ENCODE measurements at regions of chr4 and their contacts with region 1.

Region 1: GRCh38 chr4:143513306-143514168 is at the start of gene SMARCA5:
- DNase-seq: peak; percentile 92 to 99 (median 98)
- H3K4me3 ChIP-seq: peak within 1 kb of the TSS; percentile 91
- H3K4me3 Mint-ChIP-seq: peak within 1 kb of the TSS; percentile 99 to 100 (median 99)
- H3K27ac ChIP-seq: peak within 1 kb of the TSS; percentile 98
- H3K27ac Mint-ChIP-seq: peak within 1 kb of the TSS; percentile 100
- H3K4me1 ChIP-seq: peaks cover 41% of the 10 kb centered on the region
- H3K4me1 Mint-ChIP-seq: peaks cover 40 to 48% (median 44%) of the 10 kb centered on the region in 3 donors
- H3K27me3 ChIP-seq: no peaks in the 10 kb centered on the region
- H3K27me3 Mint-ChIP-seq: peaks cover 0 to 3% of the 10 kb centered on the region in 2 donors
- total RNA-seq, gene SMARCA5: 63.4 to 64.5 TPM

Region 2: GRCh38 chr4:143441678-143442077 is 71.9 kb before region 1 on chr4:
- CTCF ChIA-PET with region 1: no interaction called
- POLR2A ChIA-PET with region 1: no interaction called
- DNase-seq: no peak
- H3K4me3 ChIP-seq: no peak overlapping the region
- H3K4me3 Mint-ChIP-seq: no peak overlapping the region
- H3K27ac ChIP-seq: no peak overlapping the region
- H3K27ac Mint-ChIP-seq: no peak overlapping the region
- H3K4me1 ChIP-seq: no peaks in the 10 kb centered on the region
- H3K4me1 Mint-ChIP-seq: no peaks in the 10 kb centered on the region
- H3K27me3 ChIP-seq: no peaks in the 10 kb centered on the region
- H3K27me3 Mint-ChIP-seq: peaks cover 0 to 20% of the 10 kb centered on the region in 2 donors

Region 3: GRCh38 chr4:143558823-143559756 is 45.6 kb after region 1 on chr4:
- CTCF ChIA-PET with region 1: interaction called, 7 read pairs
- POLR2A ChIA-PET with region 1: interaction called, 11 read pairs
- DNase-seq: peak; percentile 57 to 79 (median 66)
- H3K4me3 ChIP-seq: peak overlapping the region; percentile 81
- H3K4me3 Mint-ChIP-seq: peak overlapping the region; percentile 90 to 97 (median 95)
- H3K27ac ChIP-seq: peak overlapping the region; percentile 66
- H3K27ac Mint-ChIP-seq: peak overlapping the region; percentile 80 to 99 (median 96)
- H3K4me1 ChIP-seq: peaks cover 11% of the 10 kb centered on the region
- H3K4me1 Mint-ChIP-seq: peaks cover 17 to 40% (median 28%) of the 10 kb centered on the region in 3 donors
- H3K27me3 ChIP-seq: no peaks in the 10 kb centered on the region
- H3K27me3 Mint-ChIP-seq: no peaks in the 10 kb centered on the region

Region 4: GRCh38 chr4:143653031-143653430 is 139.5 kb after region 1 on chr4:
- CTCF ChIA-PET with region 1: no interaction called
- POLR2A ChIA-PET with region 1: no interaction called
- DNase-seq: no peak
- H3K4me3 ChIP-seq: no peak overlapping the region
- H3K4me3 Mint-ChIP-seq: no peak overlapping the region
- H3K27ac ChIP-seq: no peak overlapping the region
- H3K27ac Mint-ChIP-seq: no peak overlapping the region
- H3K4me1 ChIP-seq: no peaks in the 10 kb centered on the region
- H3K4me1 Mint-ChIP-seq: no peaks in the 10 kb centered on the region
- H3K27me3 ChIP-seq: no peaks in the 10 kb centered on the region
- H3K27me3 Mint-ChIP-seq: no peaks in the 10 kb centered on the region

Measured in CD8-positive, alpha-beta memory T cell (primary cell).